ENCODE measurements at regions of chr9 and their contacts with region 1.

Region 1: GRCh38 chr9:77011973-77012821 is 7.3 kb upstream of the FOXB2 start:
- DNase-seq: no peak
- H3K4me3 ChIP-seq: no peak overlapping the region
- H3K27ac ChIP-seq: no peak overlapping the region
- H3K4me1 ChIP-seq: peaks cover 18% of the 10 kb centered on the region
- H3K27me3 ChIP-seq: peaks cover 47% of the 10 kb centered on the region
- CTCF ChIP-seq: peak; percentile 64 to 83

Region 2: GRCh38 chr9:77072022-77072421 is 59.8 kb after region 1 on chr9:
- CTCF ChIA-PET with region 1: no interaction called
- dilution Hi-C with region 1: no loop called
- in situ Hi-C with region 1: no loop called
- intact Hi-C with region 1: loop called (anchors 5 kb)
- DNase-seq: no peak
- H3K4me3 ChIP-seq: no peak overlapping the region
- H3K27ac ChIP-seq: no peak overlapping the region
- H3K4me1 ChIP-seq: no peaks in the 10 kb centered on the region
- H3K27me3 ChIP-seq: peaks cover 4% of the 10 kb centered on the region
- CTCF ChIP-seq: peak in 1 of 2 donors; percentile 20

Region 3: GRCh38 chr9:77149879-77150278 is 137.7 kb after region 1 on chr9:
- CTCF ChIA-PET with region 1: no interaction called
- dilution Hi-C with region 1: no loop called
- in situ Hi-C with region 1: no loop called
- intact Hi-C with region 1: loop called (anchors 1 kb)
- DNase-seq: no peak
- H3K4me3 ChIP-seq: no peak overlapping the region
- H3K27ac ChIP-seq: no peak overlapping the region
- H3K4me1 ChIP-seq: no peaks in the 10 kb centered on the region
- H3K27me3 ChIP-seq: peaks cover 2% of the 10 kb centered on the region
- CTCF ChIP-seq: no peak

Measured in mammary epithelial cell (primary cell).